ENCODE measurements at regions of chr14 and their contacts with region 1.

Region 1: DNA sequence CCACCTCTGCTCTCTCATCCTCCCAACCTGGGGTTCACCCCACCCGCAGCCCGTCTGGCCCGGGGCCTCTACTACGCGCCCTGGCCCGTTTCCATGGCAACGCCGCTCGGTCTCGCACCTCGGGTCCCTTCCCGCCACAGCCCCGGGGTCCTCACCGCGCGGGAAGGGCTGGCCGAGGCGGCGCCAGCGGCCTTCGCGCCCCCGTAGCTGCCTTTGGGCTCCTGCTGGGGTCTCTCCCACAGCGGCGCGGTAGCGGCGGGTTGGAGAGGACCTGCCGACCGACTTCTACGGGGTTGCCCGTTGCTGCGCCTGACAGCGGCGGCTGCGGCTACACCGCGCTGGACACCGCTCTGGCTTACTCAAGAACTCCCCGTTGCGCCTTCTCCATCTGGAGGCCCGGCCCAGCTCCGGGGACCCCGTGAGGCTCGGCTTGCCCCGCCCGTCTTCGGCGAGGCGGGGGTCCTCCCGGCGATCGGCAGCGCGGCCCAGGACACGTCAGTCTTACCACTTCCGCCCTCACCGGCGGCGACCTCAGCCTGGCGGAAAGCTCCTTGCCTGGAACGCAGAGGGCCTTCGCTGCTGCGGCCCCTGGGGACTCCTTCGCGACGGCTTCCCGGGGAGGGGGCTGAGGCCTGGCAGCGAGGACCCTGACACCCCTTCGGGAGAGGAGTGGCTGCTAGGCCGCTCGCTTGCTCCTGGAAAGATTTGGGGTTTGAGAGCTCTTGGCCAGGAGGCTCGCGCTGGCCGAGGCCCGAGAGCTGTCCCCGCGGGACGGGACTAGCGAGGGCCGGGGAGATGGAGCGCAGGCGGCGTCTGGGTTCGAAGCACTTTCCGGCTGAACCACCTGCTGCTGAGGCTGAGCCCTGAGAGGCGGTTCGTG is at the start of gene TM9SF1:
- H3K4me3 ChIP-seq: peak within 1 kb of the TSS; percentile 89
- H3K27ac ChIP-seq: peak within 1 kb of the TSS; percentile 97
- H3K4me1 ChIP-seq: peaks cover 4% of the 10 kb centered on the region; the same call in 1 of the 2 replicates
- CTCF ChIP-seq: 0 out of 2 replicates have a peak, but pooled peaks have one; percentile 29

Region 2: GRCh38 chr14:24013654-24014514 is 181.5 kb before region 1 on chr14:
- CTCF ChIA-PET with region 1: no interaction called
- POLR2A ChIA-PET with region 1: no interaction called
- H3K4me3 ChIP-seq: no peak overlapping the region
- H3K27ac ChIP-seq: no peak overlapping the region
- H3K4me1 ChIP-seq: 0 out of 2 replicates have a peak, but pooled peaks cover 4% of the 10 kb centered on the region
- CTCF ChIP-seq: peak; percentile 68

Region 3: DNA sequence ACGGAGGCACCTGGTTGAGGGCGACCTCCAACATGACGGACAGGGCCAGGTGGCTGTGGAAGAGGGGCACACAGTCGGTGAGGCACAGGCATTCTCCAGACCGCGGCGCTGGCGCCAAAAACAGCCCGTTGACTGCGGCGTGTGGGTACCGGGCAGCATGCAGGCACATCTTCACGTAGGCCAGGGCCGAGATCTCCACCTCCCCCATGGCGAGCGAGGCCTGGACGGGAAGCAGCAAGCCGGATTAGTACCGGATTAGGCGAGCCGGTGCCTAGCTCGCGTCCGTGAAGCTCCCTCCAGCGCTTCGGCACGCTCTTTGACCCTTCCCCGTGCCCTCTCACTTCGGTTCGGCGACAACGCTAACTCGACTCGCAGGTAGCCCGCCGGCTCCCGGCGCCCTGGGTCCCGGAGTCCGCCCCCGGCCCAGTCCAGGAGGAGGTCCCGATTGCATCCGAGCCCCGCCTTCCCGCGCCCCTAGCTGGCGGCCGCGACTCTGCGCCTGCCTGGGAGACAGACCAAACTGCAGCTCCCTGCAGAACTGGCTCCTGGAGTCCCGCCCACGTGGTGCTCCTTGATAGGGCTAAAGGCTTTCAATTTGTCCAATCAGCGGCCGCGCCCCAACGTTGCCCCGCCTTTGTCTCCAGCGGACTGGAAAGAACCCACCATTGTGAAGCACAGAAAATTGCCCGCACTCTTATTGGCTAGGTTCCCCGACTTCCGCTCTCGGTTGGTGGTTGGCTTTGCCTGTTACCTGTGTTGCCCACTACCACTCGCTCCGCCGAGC is 54.1 kb before region 1 on chr14 and contains the start of gene EMC9:
- CTCF ChIA-PET with region 1: no interaction called
- POLR2A ChIA-PET with region 1: interaction called, 14 read pairs
- H3K4me3 ChIP-seq: peak within 1 kb of the TSS; percentile 90
- H3K27ac ChIP-seq: peak within 1 kb of the TSS; percentile 89
- H3K4me1 ChIP-seq: peaks cover 8% of the 10 kb centered on the region
- CTCF ChIP-seq: peak; percentile 78

Region 4: GRCh38 chr14:24146978-24147760 is 48.3 kb before region 1 on chr14 and contains the start of gene RNF31:
- CTCF ChIA-PET with region 1: no interaction called
- POLR2A ChIA-PET with region 1: interaction called, 14 read pairs
- H3K4me3 ChIP-seq: peak within 1 kb of the TSS; percentile 91
- H3K27ac ChIP-seq: peak within 1 kb of the TSS; percentile 81; the same call in 1 of the 2 replicates
- H3K4me1 ChIP-seq: peaks cover 8% of the 10 kb centered on the region
- CTCF ChIP-seq: no peak

Measured in HEK293 (cell line).